ENCODE measurements at regions of chr14 and their contacts with region 1.

Region 1: GRCh38 chr14:76514613-76515012 is 138.7 kb downstream of the ESRRB start:
- DNase-seq: peak; percentile 40 to 59 (median 48)
- ATAC-seq: peak; percentile 40
- H3K4me3 ChIP-seq: no peak overlapping the region
- H3K27ac ChIP-seq: no peak overlapping the region
- H3K4me1 ChIP-seq: no peaks in the 10 kb centered on the region
- H3K27me3 ChIP-seq: no peaks in the 10 kb centered on the region
- CTCF ChIP-seq: peak in 6 of 7 experiments; percentile 12 to 52 (median 34)
- POLR2A ChIP-seq: no peak

Region 2: DNA sequence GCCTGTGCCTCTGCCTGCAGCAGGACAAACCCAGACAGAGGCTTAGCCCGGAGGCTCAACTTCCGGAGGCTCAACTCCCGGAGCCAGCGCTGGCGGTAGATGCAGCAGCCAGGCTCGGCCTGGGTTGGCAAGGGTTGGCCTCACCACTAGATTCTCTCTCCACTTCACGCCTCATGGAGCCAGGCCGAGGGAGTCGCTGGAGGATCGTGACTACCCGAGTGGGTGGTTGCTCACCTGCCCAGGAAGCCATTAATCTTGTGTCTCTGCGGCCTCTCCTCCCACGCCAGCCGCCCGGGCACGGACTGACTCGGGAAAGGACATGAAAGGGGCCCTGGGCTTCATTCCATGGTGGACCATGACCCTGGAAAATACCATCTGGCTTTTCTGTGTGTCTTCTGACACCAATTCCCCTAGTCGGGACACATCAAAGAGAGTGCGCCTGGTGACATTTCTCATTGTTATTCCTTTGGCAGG is 117.9 kb before region 1 on chr14:
- intact Hi-C with region 1: no loop called
- DNase-seq: no peak
- ATAC-seq: no peak
- H3K4me3 ChIP-seq: no peak overlapping the region
- H3K27ac ChIP-seq: no peak overlapping the region
- H3K4me1 ChIP-seq: no peaks in the 10 kb centered on the region
- H3K27me3 ChIP-seq: no peaks in the 10 kb centered on the region
- CTCF ChIP-seq: no peak
- POLR2A ChIP-seq: no peak

Region 3: DNA sequence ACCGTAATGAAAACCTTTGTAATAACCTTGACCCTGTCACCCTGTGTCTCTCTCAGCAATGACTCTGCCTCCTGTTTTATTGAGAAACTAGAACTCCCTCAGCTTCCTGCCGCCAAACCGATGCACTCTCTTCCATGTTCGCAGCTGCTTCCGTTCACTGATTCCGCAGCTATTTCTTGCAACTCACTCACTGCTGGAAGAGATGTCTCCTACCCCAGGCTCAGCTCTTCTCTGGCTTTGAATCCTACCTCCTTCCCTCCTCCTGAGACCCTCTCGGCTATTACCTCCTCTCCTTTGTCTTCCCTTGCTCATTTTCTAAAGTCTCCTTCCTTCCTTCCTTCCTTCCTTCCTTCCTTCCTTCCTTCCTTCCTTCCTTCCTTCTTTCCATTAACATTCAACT is 67.7 kb before region 1 on chr14:
- intact Hi-C with region 1: no loop called
- DNase-seq: no peak
- ATAC-seq: no peak
- H3K4me3 ChIP-seq: no peak overlapping the region
- H3K27ac ChIP-seq: no peak overlapping the region
- H3K4me1 ChIP-seq: no peaks in the 10 kb centered on the region
- H3K27me3 ChIP-seq: no peaks in the 10 kb centered on the region
- CTCF ChIP-seq: no peak
- POLR2A ChIP-seq: no peak

Region 4: DNA sequence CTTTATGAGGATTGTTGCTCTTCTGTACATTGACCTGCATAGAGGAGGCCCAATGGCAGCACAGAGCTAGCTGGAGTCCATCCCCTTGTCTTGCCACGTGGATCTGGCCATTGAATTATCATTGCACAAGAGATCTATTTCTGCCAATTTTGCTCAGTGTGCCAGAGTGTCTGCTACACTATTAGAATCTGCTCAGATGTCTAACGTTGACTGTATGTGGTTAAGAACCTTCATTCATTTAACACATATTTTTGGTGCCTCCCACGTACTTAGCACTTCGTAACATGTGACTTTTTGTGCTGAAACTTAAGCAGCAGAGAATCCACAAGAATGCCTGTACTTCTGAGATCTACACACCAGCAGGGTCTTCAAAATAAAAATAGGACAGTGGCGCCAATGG is 80.7 kb after region 1 on chr14:
- intact Hi-C with region 1: no loop called
- DNase-seq: no peak
- ATAC-seq: no peak
- H3K4me3 ChIP-seq: no peak overlapping the region
- H3K27ac ChIP-seq: no peak overlapping the region
- H3K4me1 ChIP-seq: peaks cover 3% of the 10 kb centered on the region
- H3K27me3 ChIP-seq: no peaks in the 10 kb centered on the region
- CTCF ChIP-seq: no peak
- POLR2A ChIP-seq: no peak

Region 5: GRCh38 chr14:76647697-76648298 is 133.2 kb after region 1 on chr14:
- intact Hi-C with region 1: loop called (anchors 10 kb)
- DNase-seq: peak; percentile 19 to 46 (median 40)
- ATAC-seq: no peak
- H3K4me3 ChIP-seq: no peak overlapping the region
- H3K27ac ChIP-seq: no peak overlapping the region
- H3K4me1 ChIP-seq: no peaks in the 10 kb centered on the region
- H3K27me3 ChIP-seq: no peaks in the 10 kb centered on the region
- CTCF ChIP-seq: peak; percentile 53 to 72 (median 67)
- POLR2A ChIP-seq: no peak

Measured in body of pancreas (tissue), 4 donors.